Activated naive CD4-positive, alpha-beta T cell treated with anti-CD3 and anti-CD28 coated beads for 36 hours (primary cell): ENCODE measurements at regions of chr3 and their contacts with region 1.

Region 1: DNA sequence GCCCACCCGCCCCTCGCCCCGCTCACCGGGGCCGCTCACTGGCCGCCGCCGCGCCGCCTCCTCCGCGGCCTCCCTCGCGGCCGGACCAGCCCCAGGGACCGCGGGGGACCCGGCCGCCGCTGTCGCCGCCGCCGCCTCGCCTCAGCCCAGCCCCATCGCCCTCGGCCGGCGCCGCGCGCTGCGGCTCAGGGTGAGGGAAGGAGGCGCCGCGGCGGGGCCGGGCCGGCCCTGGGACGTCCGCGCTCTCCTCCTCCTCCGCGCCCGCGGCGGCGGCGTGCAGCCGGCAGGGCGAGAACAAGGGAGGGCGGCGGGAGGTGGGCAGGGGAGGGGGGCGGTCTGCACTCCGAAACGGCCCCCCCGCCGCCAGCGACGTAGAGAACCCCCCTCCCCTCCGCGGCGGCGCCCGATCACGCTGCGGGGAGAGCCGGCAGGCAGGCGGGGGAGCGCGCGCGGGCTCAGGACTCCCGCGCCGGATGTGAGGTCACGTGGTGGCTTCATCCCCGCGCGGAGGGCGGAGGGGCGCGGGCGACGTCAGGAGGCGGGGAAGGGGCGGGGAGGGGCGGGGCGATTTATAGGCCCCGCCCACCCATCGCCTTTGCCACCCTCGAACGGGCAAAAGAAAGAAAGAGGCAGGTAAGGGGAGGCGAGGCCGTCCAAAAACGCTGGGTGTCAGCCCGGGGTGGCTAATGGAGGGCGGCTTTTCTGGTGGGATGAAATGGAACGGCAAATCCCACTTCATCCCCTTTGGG is at the start of gene ATP13A3:
- DNase-seq: peak; percentile 86
- H3K4me3 Mint-ChIP-seq: peak within 1 kb of the TSS; percentile 91
- H3K27ac Mint-ChIP-seq: peak within 1 kb of the TSS; percentile 94
- H3K4me1 Mint-ChIP-seq: peaks cover 59% of the 10 kb centered on the region
- H3K27me3 Mint-ChIP-seq: no peaks in the 10 kb centered on the region
- total RNA-seq, gene ATP13A3: 88.4 to 92.3 TPM

Region 2: GRCh38 chr3:194465920-194466570 is 20.7 kb before region 1 on chr3:
- CTCF ChIA-PET with region 1: interaction called, 3 read pairs
- intact Hi-C with region 1: loop called (anchors 2 kb)
- DNase-seq: no peak
- H3K4me3 Mint-ChIP-seq: no peak overlapping the region
- H3K27ac Mint-ChIP-seq: peak overlapping the region; percentile 65
- H3K4me1 Mint-ChIP-seq: peaks cover 30% of the 10 kb centered on the region
- H3K27me3 Mint-ChIP-seq: no peaks in the 10 kb centered on the region

Region 3: GRCh38 chr3:194521514-194522260 is 35.0 kb after region 1 on chr3:
- CTCF ChIA-PET with region 1: interaction called, 3 read pairs
- intact Hi-C with region 1: loop called (anchors 1 kb)
- DNase-seq: no peak
- H3K4me3 Mint-ChIP-seq: no peak overlapping the region
- H3K27ac Mint-ChIP-seq: no peak overlapping the region
- H3K4me1 Mint-ChIP-seq: peaks cover 34% of the 10 kb centered on the region
- H3K27me3 Mint-ChIP-seq: peaks cover 7% of the 10 kb centered on the region

Region 4: GRCh38 chr3:194583604-194584318 is 97.0 kb after region 1 on chr3:
- CTCF ChIA-PET with region 1: interaction called, 5 read pairs
- intact Hi-C with region 1: loop called (anchors 1 kb)
- DNase-seq: peak; percentile 94
- H3K4me3 Mint-ChIP-seq: peak overlapping the region; percentile 94
- H3K27ac Mint-ChIP-seq: peak overlapping the region; percentile 94
- H3K4me1 Mint-ChIP-seq: peaks cover 19% of the 10 kb centered on the region
- H3K27me3 Mint-ChIP-seq: no peaks in the 10 kb centered on the region

Region 5: GRCh38 chr3:194769020-194769643 is 282.4 kb after region 1 on chr3:
- CTCF ChIA-PET with region 1: no interaction called
- intact Hi-C with region 1: loop called (anchors 1 kb)
- DNase-seq: peak; percentile 99
- H3K4me3 Mint-ChIP-seq: peak overlapping the region; percentile 70
- H3K27ac Mint-ChIP-seq: peak overlapping the region; percentile 66
- H3K4me1 Mint-ChIP-seq: peaks cover 11% of the 10 kb centered on the region
- H3K27me3 Mint-ChIP-seq: no peaks in the 10 kb centered on the region